Stomach (tissue), 19 donors: ENCODE measurements at regions of chr16 and their contacts with region 1.

Region 1: GRCh38 chr16:69123910-69124309 is 8.5 kb downstream of the CHTF8 start:
- DNase-seq: peak; percentile 57 to 88
- H3K4me3 ChIP-seq: no peak overlapping the region
- H3K27ac ChIP-seq: no peak overlapping the region
- H3K4me1 ChIP-seq: peaks cover 0 to 37% (median 11%) of the 10 kb centered on the region in 4 donors
- H3K27me3 ChIP-seq: no peaks in the 10 kb centered on the region
- CTCF ChIP-seq: peak in 5 of 7 experiments; percentile 51 to 69 (median 65)
- EP300 ChIP-seq: no peak
- POLR2A ChIP-seq: no peak

Region 2: DNA sequence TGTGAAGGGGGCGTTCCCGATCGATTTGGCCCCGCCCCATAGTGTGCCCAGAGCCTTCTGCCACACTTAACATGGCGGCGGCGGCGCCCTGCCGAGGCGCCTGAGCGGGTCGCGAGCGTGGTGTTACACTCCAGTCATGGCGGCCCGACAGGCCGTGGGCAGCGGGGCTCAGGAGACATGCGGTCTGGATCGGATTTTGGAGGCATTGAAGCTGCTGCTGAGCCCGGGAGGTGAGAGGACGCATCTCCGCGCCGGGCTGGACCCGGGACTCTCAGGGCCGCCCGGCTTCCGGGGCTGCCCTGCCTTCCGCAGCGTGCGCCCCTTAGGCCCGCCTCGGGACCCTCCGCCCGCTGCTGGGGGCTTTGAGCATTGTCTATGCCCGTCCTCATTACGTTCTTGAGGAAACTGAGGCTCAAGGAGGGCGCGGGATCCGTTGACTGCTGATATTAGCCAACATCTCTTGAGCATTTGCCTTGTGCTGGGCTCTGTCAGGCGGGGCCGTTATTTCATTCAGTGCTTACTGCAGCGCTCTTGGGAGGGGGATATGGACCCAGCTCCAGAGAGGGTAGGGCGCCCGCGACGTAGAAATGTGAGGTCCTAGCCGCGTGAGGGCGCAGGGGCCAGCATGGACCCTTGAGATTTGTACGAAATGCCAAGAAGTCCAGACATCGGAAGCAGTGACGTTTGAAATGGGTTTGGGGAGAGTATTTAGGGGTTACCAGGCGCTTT is 280.3 kb before region 1 on chr16 and contains the start of gene TANGO6:
- intact Hi-C with region 1: loop called (anchors 10 kb)
- DNase-seq: peak; percentile 87 to 93
- H3K4me3 ChIP-seq: peak within 1 kb of the TSS; percentile 67 to 97 (median 77)
- H3K27ac ChIP-seq: peak within 1 kb of the TSS; percentile 79 to 91 (median 85)
- H3K4me1 ChIP-seq: peaks cover 0 to 33% (median 13%) of the 10 kb centered on the region in 4 donors
- H3K27me3 ChIP-seq: no peaks in the 10 kb centered on the region
- CTCF ChIP-seq: no peak
- EP300 ChIP-seq: no peak
- POLR2A ChIP-seq: no peak
- total RNA-seq, gene TANGO6: 9.7 to 32.7 (median 17.3) TPM

Region 3: GRCh38 chr16:68902008-68902968 is 221.6 kb before region 1 on chr16:
- intact Hi-C with region 1: loop called (anchors 5 kb)
- DNase-seq: peak in 1 of 2 donors; percentile 80
- H3K4me3 ChIP-seq: no peak overlapping the region
- H3K27ac ChIP-seq: no peak overlapping the region
- H3K4me1 ChIP-seq: peaks cover 0 to 12% (median 0%) of the 10 kb centered on the region in 4 donors
- H3K27me3 ChIP-seq: no peaks in the 10 kb centered on the region
- CTCF ChIP-seq: peak in 5 of 7 experiments; percentile 34 to 62 (median 51)
- EP300 ChIP-seq: no peak
- POLR2A ChIP-seq: no peak